ENCODE measurements at regions of chr4 and their contacts with region 1.

Region 1: DNA sequence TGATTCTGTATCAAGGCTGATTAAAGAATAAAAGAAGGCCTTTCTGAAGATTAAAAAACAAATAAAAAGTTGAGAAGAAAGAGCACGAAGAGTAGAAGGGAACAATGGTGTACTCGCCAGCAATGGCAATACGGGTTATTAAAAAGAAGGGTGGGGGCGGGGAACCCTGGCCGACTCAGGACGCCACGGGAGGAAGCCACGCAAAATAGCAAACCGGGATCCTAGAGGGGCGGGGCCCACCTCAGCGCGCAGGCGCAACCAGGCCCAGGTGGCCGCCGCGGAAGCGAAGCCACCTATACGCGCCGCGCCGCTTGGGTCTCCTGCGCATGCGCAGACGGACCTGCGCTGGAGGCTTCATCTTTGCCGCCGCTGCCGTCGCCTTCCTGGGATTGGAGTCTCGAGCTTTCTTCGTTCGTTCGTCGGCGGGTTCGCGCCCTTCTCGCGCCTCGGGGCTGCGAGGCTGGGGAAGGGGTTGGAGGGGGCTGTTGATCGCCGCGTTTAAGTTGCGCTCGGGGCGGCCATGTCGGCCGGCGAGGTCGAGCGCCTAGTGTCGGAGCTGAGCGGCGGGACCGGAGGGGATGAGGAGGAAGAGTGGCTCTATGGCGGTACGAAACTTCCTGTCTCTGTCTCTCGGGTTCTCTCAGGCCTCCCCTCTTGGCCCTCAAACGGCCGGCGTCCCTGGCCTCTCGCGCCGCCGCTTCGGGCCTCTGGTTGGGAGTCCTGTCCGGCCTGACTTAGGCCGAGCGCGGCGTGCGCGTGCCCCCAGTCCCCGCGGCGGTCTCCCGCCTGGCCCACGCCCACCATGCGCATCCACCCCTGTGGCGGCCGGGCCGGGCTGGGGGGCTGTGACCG is at the start of gene FIP1L1:
- DNase-seq: peak; percentile 94 to 99
- ATAC-seq: peak; percentile 91 to 96 (median 94)
- H3K4me3 ChIP-seq: peak within 1 kb of the TSS; percentile 98
- H3K4me3 Mint-ChIP-seq: peak within 1 kb of the TSS; percentile 97
- H3K27ac ChIP-seq: peak within 1 kb of the TSS; percentile 94
- H3K27ac Mint-ChIP-seq: peak within 1 kb of the TSS; percentile 95 to 97
- H3K4me1 ChIP-seq: peaks cover 5% of the 10 kb centered on the region
- H3K4me1 Mint-ChIP-seq: peaks cover 36% of the 10 kb centered on the region in 2 donors
- H3K27me3 ChIP-seq: no peaks in the 10 kb centered on the region
- H3K27me3 Mint-ChIP-seq: peaks cover 4 to 7% of the 10 kb centered on the region in 2 donors
- CTCF ChIP-seq: no peak
- total RNA-seq, gene FIP1L1: 76.2 to 94.0 (median 85.6) TPM

Region 2: GRCh38 chr4:52869196-52869595 is 508.3 kb before region 1 on chr4:
- intact Hi-C with region 1: no loop called
- DNase-seq: no peak
- ATAC-seq: no peak
- H3K4me3 ChIP-seq: no peak overlapping the region
- H3K4me3 Mint-ChIP-seq: no peak overlapping the region
- H3K27ac ChIP-seq: no peak overlapping the region
- H3K27ac Mint-ChIP-seq: no peak overlapping the region
- H3K4me1 ChIP-seq: no peaks in the 10 kb centered on the region
- H3K4me1 Mint-ChIP-seq: no peaks in the 10 kb centered on the region
- H3K27me3 ChIP-seq: no peaks in the 10 kb centered on the region
- H3K27me3 Mint-ChIP-seq: peaks cover 0 to 7% of the 10 kb centered on the region in 2 donors
- CTCF ChIP-seq: no peak

Region 3: DNA sequence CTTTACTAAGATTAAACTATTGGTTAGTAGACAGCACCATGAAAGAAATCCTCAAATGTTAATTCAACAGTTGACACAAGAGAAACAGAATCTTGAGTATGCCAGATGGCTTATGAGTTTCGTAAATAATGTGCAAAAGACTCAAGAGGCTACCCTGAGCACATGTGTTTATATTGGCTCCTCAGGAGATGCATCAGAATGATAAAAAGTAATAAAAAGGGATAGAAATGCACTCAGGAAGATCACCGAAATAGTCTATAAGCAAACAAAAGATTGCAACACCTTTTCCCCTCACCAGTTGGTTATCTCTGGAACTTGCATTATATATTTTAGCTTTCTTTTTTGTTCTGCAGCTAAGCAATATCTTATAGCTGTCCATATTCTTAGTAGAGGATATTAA is 96.1 kb before region 1 on chr4:
- intact Hi-C with region 1: no loop called
- DNase-seq: no peak
- ATAC-seq: no peak
- H3K4me3 ChIP-seq: no peak overlapping the region
- H3K4me3 Mint-ChIP-seq: no peak overlapping the region
- H3K27ac ChIP-seq: no peak overlapping the region
- H3K27ac Mint-ChIP-seq: no peak overlapping the region
- H3K4me1 ChIP-seq: no peaks in the 10 kb centered on the region
- H3K4me1 Mint-ChIP-seq: peaks cover 0 to 10% of the 10 kb centered on the region in 2 donors
- H3K27me3 ChIP-seq: no peaks in the 10 kb centered on the region
- H3K27me3 Mint-ChIP-seq: no peaks in the 10 kb centered on the region
- CTCF ChIP-seq: no peak

Region 4: DNA sequence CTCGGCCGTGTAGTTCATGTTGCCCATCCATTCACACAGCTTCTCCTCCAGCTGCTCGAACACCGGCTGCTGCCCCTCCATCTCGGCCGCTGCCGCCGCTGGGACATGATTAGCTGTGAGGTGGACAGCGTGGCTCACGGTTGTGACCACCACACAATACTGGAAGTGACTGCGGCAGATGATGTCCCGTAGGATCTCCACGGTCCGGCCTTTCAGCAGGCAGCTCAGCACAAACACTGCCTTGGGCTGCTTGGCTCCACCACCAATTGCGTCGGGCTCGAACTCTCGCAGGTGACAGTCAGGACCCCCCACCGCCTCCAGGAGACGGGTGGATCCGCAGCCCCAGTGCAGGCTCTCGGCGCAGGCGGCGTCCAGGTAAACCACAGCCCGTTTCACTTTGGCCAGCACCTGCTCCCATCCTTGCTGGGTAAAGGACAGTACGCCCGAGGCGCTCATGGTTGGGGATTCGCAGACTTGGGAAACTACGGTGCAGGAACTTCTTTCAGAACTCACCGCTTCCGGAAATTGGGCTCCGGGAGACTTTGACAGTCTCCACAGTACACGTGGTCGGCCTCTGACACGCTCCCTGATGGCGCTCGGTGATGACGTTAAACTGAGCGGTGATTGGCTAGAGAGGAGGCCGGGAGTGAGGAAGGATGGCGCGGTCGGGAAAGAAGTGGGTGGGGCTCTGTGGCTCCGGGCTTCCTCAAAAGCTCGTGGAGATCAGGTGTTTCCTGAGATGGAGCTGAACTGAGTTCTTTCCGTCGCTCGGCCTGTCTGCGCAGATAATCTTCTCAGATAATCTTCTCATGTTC is 11.9 kb before region 1 on chr4 and contains the start of gene SCFD2:
- intact Hi-C with region 1: loop called (anchors 1 kb)
- DNase-seq: peak; percentile 94 to 99
- ATAC-seq: peak; percentile 97 to 99 (median 98)
- H3K4me3 ChIP-seq: peak within 1 kb of the TSS; percentile 88
- H3K4me3 Mint-ChIP-seq: peak within 1 kb of the TSS; percentile 97
- H3K27ac ChIP-seq: peak within 1 kb of the TSS; percentile 70
- H3K27ac Mint-ChIP-seq: peak within 1 kb of the TSS; percentile 86 to 96
- H3K4me1 ChIP-seq: peaks cover 15% of the 10 kb centered on the region
- H3K4me1 Mint-ChIP-seq: peaks cover 33 to 42% of the 10 kb centered on the region in 2 donors
- H3K27me3 ChIP-seq: no peaks in the 10 kb centered on the region
- H3K27me3 Mint-ChIP-seq: peaks cover 21 to 27% of the 10 kb centered on the region in 2 donors
- CTCF ChIP-seq: no peak
- total RNA-seq, gene SCFD2: 26.4 to 29.4 (median 28.9) TPM

Region 5: DNA sequence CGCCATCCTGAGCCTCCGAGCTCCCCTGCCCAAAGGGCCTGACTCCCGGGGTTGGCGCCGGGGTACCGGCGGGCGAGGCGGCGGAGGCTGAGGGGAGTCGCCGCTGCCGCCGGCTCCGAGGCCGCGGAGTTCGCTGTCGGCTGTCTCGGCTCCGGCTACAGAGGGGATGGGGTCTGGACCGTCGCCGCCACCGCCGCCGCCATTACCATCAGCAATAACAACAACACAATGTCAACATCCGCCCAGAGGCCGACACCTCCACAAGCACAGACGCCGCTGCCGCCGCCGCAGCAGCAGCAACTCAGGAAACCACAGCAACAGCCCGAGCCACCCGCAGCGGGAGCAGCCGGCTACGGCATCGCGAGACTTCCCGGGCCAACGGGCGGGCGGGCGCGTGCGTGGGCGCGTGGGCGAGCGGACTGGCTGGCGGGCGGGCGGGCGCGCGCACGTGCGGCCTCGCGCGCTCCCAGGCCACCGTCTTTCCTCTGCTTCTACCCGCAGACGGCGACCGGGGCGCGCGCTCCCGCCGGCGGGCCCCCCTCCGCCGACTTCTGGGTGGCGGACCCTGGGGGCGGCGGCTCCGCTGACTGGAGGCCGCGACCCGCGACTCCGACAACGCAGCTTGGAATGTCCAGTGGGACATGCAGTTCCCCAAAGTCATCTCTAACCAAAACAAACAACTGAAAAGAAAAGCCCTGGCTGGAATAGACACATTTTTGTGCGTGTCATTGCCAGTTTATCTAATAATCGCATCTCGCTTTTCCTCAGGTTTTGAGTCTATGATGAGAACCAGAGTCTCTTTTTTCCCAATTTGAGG is 687.0 kb after region 1 on chr4 and contains the start of gene CHIC2:
- intact Hi-C with region 1: loop called (anchors 5 kb)
- DNase-seq: peak; percentile 98 to 99
- ATAC-seq: peak; percentile 80 to 92 (median 90)
- H3K4me3 ChIP-seq: peak within 1 kb of the TSS; percentile 76
- H3K4me3 Mint-ChIP-seq: peak within 1 kb of the TSS; percentile 95
- H3K27ac ChIP-seq: peak within 1 kb of the TSS; percentile 88
- H3K27ac Mint-ChIP-seq: peak within 1 kb of the TSS; percentile 96 to 97
- H3K4me1 ChIP-seq: no peaks in the 10 kb centered on the region
- H3K4me1 Mint-ChIP-seq: peaks cover 51 to 53% of the 10 kb centered on the region in 2 donors
- H3K27me3 ChIP-seq: no peaks in the 10 kb centered on the region
- H3K27me3 Mint-ChIP-seq: no peaks in the 10 kb centered on the region
- CTCF ChIP-seq: no peak
- total RNA-seq, gene CHIC2: 62.0 to 85.0 (median 79.7) TPM

Measured in natural killer cell (primary cell).